Mammary epithelial cell (primary cell): ENCODE measurements at regions of chr10 and their contacts with region 1.

Region 1: DNA sequence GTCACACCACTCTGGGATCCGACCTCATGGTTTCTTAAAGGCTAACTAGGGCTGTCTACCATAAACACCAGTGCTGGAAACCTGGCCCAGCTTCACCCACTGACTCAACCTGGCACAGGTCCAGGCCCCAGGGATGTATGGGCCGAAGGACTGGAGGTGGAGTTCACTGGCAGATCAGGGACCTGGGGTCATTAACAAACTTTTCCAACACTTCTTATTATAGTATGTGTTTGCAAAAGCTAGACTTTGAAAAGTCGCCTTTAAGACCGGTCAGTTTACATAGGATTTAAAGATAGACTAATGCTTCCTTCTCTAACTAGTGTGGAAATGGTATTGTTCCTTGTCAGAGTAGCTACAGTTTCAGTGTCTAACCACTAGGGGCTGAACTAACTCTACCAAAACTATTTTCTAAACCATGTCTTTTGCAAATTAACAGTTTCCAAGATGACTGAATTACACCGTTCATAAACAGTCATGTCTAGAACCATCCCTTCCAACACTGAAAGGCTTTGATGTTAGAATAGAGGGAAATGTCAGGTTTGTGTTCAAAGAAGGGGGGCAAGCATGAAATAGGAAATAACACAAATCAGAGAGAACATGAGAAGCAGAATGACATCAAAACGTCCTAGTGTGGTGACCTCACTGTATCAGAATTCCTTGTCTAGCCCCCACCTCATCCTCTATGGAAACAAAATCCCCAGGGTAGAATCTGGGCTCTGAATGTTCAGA is 29.7 kb downstream of the STN1 start:
- DNase-seq: peak; percentile 79
- H3K4me3 ChIP-seq: no peak overlapping the region
- H3K27ac ChIP-seq: peak overlapping the region; percentile 68
- H3K4me1 ChIP-seq: peaks cover 59% of the 10 kb centered on the region
- H3K27me3 ChIP-seq: no peaks in the 10 kb centered on the region
- CTCF ChIP-seq: peak; percentile 78 to 94

Region 2: GRCh38 chr10:103598654-103599115 is 289.6 kb before region 1 on chr10:
- CTCF ChIA-PET with region 1: no interaction called
- dilution Hi-C with region 1: no loop called
- in situ Hi-C with region 1: no loop called
- intact Hi-C with region 1: loop called (anchors 2 kb)
- DNase-seq: peak; percentile 32
- H3K4me3 ChIP-seq: no peak overlapping the region
- H3K27ac ChIP-seq: no peak overlapping the region
- H3K4me1 ChIP-seq: no peaks in the 10 kb centered on the region
- H3K27me3 ChIP-seq: no peaks in the 10 kb centered on the region
- CTCF ChIP-seq: peak; percentile 40 to 59

Region 3: DNA sequence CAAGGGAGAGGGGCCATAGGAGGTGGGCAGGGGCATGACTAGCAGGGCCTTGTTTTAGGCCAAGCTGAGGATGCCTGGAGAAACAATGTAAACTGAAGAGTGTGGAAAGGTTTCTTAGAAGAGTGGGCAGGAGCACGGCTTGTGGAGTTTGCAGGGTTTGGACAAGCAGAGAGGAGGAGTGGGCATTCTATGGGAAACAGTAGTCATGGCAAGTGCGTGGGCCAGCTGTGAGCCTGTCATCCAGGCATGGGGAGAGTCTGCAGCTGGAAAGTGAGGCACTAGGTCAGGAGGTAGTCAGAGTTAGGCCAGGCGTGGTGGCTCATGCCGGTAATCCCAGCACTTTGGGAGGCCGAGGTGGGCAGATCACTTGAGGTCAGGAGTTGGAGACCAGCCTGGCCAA is 163.0 kb before region 1 on chr10:
- CTCF ChIA-PET with region 1: no interaction called
- dilution Hi-C with region 1: no loop called
- in situ Hi-C with region 1: no loop called
- intact Hi-C with region 1: no loop called
- DNase-seq: no peak
- H3K4me3 ChIP-seq: no peak overlapping the region
- H3K27ac ChIP-seq: no peak overlapping the region
- H3K4me1 ChIP-seq: no peaks in the 10 kb centered on the region
- H3K27me3 ChIP-seq: no peaks in the 10 kb centered on the region
- CTCF ChIP-seq: no peak

Region 4: DNA sequence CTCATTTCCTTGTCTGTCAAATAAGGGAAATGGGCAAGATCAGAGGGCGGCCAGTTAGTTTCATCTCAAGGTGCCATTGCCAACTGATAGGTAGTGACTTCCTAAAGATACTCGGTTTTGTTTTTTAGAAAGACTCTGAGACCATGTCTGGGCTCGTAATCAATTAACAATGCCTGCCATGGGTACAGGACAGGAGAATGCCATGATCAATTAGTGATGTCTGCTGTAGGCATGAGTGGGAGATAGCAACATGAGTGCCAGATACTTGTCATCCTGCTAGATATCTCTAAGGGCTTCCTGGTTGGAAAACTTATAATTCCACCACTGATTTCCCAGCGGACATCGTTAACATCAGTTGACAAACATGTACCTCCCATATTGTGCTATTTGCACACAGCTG is 97.7 kb before region 1 on chr10:
- CTCF ChIA-PET with region 1: no interaction called
- dilution Hi-C with region 1: no loop called
- in situ Hi-C with region 1: no loop called
- intact Hi-C with region 1: no loop called
- DNase-seq: no peak
- H3K4me3 ChIP-seq: no peak overlapping the region
- H3K27ac ChIP-seq: peak overlapping the region; percentile 23
- H3K4me1 ChIP-seq: peaks cover 60% of the 10 kb centered on the region
- H3K27me3 ChIP-seq: no peaks in the 10 kb centered on the region
- CTCF ChIP-seq: no peak

Region 5: GRCh38 chr10:103800789-103801540 is 87.3 kb before region 1 on chr10:
- CTCF ChIA-PET with region 1: no interaction called
- dilution Hi-C with region 1: no loop called
- in situ Hi-C with region 1: no loop called
- intact Hi-C with region 1: loop called (anchors 5 kb)
- DNase-seq: peak; percentile 98
- H3K4me3 ChIP-seq: no peak overlapping the region
- H3K27ac ChIP-seq: peak overlapping the region; percentile 92
- H3K4me1 ChIP-seq: peaks cover 72% of the 10 kb centered on the region
- H3K27me3 ChIP-seq: no peaks in the 10 kb centered on the region
- CTCF ChIP-seq: no peak

Region 6: GRCh38 chr10:103918053-103918846 is 30.0 kb after region 1 on chr10 and contains the start of gene STN1:
- CTCF ChIA-PET with region 1: interaction called, 4 read pairs
- dilution Hi-C with region 1: no loop called
- in situ Hi-C with region 1: no loop called
- intact Hi-C with region 1: loop called (anchors 1 kb)
- DNase-seq: peak; percentile 92
- H3K4me3 ChIP-seq: peak within 1 kb of the TSS; percentile 63 to 67 (median 64)
- H3K27ac ChIP-seq: peak within 1 kb of the TSS; percentile 83
- H3K4me1 ChIP-seq: peaks cover 31% of the 10 kb centered on the region
- H3K27me3 ChIP-seq: no peaks in the 10 kb centered on the region
- CTCF ChIP-seq: no peak
- total RNA-seq, gene STN1: 42.6 to 65.0 TPM

Region 7: GRCh38 chr10:103990121-103990520 is 101.8 kb after region 1 on chr10:
- CTCF ChIA-PET with region 1: no interaction called
- dilution Hi-C with region 1: loop called (anchors 5 kb)
- in situ Hi-C with region 1: no loop called
- intact Hi-C with region 1: loop called (anchors 5 kb)
- DNase-seq: no peak
- H3K4me3 ChIP-seq: no peak overlapping the region
- H3K27ac ChIP-seq: no peak overlapping the region
- H3K4me1 ChIP-seq: peaks cover 7% of the 10 kb centered on the region
- H3K27me3 ChIP-seq: no peaks in the 10 kb centered on the region
- CTCF ChIP-seq: no peak

Region 8: GRCh38 chr10:104080762-104081161 is 192.5 kb after region 1 on chr10:
- CTCF ChIA-PET with region 1: no interaction called
- dilution Hi-C with region 1: no loop called
- in situ Hi-C with region 1: no loop called
- intact Hi-C with region 1: loop called (anchors 2 kb)
- DNase-seq: no peak
- H3K4me3 ChIP-seq: peak overlapping the region; percentile 68 to 99 (median 96)
- H3K27ac ChIP-seq: peak overlapping the region; percentile 100
- H3K4me1 ChIP-seq: peaks cover 21% of the 10 kb centered on the region
- H3K27me3 ChIP-seq: no peaks in the 10 kb centered on the region
- CTCF ChIP-seq: peak; percentile 67 to 69

Region 9: DNA sequence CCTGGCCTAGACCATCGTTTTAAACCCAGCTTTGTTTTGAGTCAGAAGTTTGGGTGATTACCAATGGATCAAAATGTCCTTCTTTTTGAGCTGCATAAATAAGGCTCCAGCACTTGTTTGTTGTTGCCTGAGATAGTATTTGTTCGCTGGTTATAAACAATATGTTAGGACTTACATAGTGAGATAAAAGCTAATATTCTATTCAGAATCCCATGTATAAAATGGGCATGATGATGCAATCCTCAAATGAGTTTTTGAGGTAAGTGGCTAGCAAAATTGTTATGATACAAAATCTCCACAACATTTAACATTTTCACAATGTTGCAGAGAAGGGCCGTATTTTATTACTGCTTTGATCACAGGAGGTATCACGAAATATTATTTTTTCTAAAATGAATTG is 295.4 kb after region 1 on chr10:
- CTCF ChIA-PET with region 1: no interaction called
- dilution Hi-C with region 1: no loop called
- in situ Hi-C with region 1: no loop called
- intact Hi-C with region 1: no loop called
- DNase-seq: no peak
- H3K4me3 ChIP-seq: no peak overlapping the region
- H3K27ac ChIP-seq: no peak overlapping the region
- H3K4me1 ChIP-seq: no peaks in the 10 kb centered on the region
- H3K27me3 ChIP-seq: no peaks in the 10 kb centered on the region
- CTCF ChIP-seq: no peak